ENCODE measurements at regions of chr1 and their contacts with region 1.

Region 1: DNA sequence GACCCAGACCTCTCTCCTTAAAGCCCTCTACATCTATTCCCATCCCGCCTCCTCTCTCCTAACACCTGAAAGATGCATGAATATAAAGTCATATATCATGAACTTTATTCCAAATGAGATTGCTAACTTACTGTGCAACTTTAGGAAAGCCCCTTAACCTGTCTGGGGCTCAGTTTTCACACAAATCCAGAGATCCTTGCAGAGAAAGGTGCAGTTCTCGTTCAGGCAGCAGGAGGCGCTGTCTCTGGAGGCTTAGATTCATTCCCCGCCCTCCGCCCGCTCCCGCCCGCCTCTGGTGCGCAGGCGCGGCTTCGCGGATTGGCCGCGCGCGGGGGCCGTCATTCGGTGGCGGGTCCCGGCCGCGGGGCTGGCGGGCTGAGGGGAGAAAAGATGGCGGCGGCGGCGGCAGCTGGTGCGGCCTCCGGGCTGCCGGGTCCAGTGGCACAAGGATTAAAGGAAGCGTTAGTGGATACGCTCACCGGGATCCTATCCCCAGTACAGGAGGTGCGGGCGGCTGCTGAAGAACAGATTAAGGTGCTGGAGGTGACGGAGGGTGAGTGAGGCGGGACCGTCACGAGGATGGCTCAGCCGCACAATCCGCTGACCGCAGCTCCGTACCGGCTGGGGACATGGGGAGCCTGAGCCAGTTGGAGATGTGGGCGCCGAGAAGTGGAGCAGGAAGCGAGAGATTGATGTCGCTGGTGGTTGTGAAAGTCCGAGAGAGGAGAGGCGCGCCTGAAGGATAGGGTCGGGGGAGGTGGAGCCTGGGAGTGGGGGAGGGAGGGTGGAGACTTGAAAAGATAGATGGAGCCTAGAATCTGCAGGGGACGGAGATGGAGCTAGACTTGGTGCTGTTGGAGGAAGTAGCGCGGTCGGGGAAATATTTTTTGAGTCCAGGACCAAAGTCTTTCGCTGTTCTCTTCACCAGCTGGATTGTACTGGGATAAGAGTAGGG is at the start of gene IPO9:
- DNase-seq: peak; percentile 89 to 96 (median 95)
- ATAC-seq: peak; percentile 98
- H3K4me3 ChIP-seq: peak within 1 kb of the TSS; percentile 97
- H3K4me3 Mint-ChIP-seq: peak within 1 kb of the TSS; percentile 90 to 100 (median 96)
- H3K27ac ChIP-seq: peak within 1 kb of the TSS; percentile 93
- H3K27ac Mint-ChIP-seq: peak within 1 kb of the TSS; percentile 80 to 97 (median 91)
- H3K4me1 ChIP-seq: peaks cover 16 to 19% of the 10 kb centered on the region in 2 donors
- H3K4me1 Mint-ChIP-seq: peaks cover 29 to 55% (median 41%) of the 10 kb centered on the region in 7 donors
- H3K27me3 ChIP-seq: no peaks in the 10 kb centered on the region
- H3K27me3 Mint-ChIP-seq: no peaks in the 10 kb centered on the region
- total RNA-seq, gene IPO9: 28.7 to 55.3 (median 37.9) TPM

Region 2: DNA sequence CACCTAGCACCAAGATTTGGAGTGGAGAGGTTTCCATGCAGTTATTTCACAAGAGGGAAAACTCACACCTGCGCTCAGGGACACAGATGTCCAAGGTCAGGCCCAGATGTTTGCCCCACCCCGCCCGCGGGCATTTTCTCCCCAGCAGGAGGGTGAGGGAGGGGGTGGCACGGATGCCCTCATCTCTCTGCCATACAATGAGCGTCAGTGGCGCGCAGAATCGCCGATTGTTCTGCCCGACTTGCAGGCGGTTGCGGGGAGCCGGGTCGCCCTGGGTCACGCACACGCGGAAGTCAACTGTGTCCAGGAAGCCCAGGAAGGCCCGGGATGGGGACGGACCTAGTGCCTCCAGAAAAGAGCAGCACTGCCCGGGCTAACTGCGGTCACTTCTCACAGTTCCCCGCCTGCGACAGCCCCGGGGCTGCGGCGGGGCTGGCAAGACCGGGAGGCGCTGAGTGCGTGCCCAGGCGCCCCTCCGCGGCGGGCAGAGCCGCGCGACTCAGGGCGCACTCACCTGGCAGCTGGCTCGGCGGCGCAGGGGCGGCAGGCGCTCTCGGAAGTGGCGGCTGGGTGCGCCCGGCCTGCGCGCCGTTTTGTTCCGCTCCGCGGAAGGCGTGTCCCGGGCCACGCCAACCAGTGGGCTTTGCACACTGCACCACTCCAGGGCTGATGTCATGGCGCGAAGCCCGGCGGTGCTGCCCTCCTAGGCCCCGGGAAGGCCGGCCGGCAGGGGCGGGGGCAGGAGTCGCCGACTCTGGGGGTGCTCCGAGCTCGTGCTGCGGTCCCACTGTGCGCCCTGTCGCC is 322.3 kb before region 1 on chr1 and contains the start of gene CSRP1:
- CTCF ChIA-PET with region 1: no interaction called
- POLR2A ChIA-PET with region 1: interaction called, 3 read pairs
- intact Hi-C with region 1: loop called in 1 of 2 experiments (anchors 2 kb)
- DNase-seq: peak; percentile 64 to 84 (median 80)
- ATAC-seq: peak; percentile 97
- H3K4me3 ChIP-seq: peak within 1 kb of the TSS; percentile 87
- H3K4me3 Mint-ChIP-seq: peak within 1 kb of the TSS; percentile 88 to 94 (median 91)
- H3K27ac ChIP-seq: peak within 1 kb of the TSS; percentile 74
- H3K27ac Mint-ChIP-seq: peak within 1 kb of the TSS; percentile 83 to 97 (median 91)
- H3K4me1 ChIP-seq: peaks cover 20 to 28% of the 10 kb centered on the region in 2 donors
- H3K4me1 Mint-ChIP-seq: peaks cover 30 to 61% (median 57%) of the 10 kb centered on the region in 7 donors
- H3K27me3 ChIP-seq: no peaks in the 10 kb centered on the region
- H3K27me3 Mint-ChIP-seq: no peaks in the 10 kb centered on the region
- total RNA-seq, gene CSRP1: 24.2 to 83.1 (median 37.7) TPM

Region 3: DNA sequence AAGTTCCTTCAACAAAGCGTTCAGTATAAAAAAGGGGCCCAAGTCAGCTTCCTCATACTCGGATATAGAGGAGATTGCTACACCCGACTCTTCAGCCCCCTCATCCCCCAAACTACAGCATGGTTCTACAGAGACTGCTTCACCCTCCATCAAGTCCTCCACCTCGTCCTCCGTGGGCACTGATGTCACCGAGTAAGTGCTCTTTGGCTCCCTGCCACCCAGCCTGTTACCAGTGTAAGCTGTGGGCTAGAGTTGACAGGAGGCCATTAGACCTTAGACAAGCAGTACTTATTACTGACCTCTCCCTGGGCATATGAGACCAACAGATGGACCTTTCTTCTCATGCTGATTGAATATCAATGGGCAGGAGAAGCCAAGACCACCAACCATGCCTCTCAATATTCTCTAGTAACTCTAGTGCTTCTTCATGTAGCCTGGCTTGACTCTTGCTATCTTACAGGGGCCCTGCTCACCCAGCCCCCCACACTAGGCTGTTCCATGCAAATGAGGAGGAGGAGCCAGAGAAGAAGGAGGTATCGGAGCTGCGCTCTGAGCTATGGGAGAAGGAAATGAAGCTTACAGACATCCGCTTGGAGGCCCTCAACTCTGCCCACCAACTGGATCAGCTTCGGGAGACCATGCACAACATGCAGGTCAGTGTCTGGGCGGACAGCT is 21.0 kb before region 1 on chr1:
- CTCF ChIA-PET with region 1: no interaction called
- POLR2A ChIA-PET with region 1: no interaction called
- intact Hi-C with region 1: no loop called
- DNase-seq: no peak
- ATAC-seq: no peak
- H3K4me3 ChIP-seq: no peak overlapping the region
- H3K4me3 Mint-ChIP-seq: no peak overlapping the region
- H3K27ac ChIP-seq: no peak overlapping the region
- H3K27ac Mint-ChIP-seq: no peak overlapping the region
- H3K4me1 ChIP-seq: no peaks in the 10 kb centered on the region
- H3K4me1 Mint-ChIP-seq: no peaks in the 10 kb centered on the region
- H3K27me3 ChIP-seq: no peaks in the 10 kb centered on the region
- H3K27me3 Mint-ChIP-seq: no peaks in the 10 kb centered on the region

Region 4: DNA sequence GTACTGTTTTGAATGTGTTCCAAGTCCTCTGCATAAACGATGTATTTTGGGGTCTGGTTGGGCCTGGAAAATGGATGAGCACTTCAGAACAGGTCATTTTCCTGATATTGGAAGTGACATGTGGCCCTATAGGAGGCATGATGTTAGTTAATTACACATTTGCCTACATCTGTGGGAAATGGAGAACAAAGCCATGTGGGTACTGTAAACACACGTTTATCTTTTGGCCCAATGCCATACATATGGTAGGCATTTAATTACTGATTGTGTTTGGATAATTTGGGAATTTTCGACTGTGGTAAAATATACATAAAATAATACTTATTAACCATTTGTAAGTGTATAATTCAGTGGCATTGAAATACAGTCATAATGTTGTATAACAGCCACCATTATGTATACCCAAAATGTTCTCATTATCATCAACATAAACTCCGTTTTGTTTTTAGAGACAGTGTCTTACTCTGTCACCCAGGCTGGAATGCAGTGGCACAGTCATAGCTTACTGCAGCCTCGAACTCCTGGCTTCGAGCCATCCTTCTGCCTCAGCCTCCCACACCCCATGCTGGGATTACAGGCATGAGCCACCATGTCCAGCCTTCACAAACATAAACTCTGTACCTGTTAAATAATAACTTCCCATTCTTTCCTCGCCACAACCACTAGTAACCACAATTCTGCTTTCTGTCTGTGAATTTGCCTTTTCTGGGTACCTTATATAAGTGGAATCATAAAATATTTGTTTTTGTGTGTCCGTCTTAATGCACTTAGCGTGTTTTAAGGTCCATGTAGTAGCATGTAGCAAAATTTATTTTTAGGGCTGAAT is 141.4 kb after region 1 on chr1:
- CTCF ChIA-PET with region 1: no interaction called
- POLR2A ChIA-PET with region 1: no interaction called
- intact Hi-C with region 1: loop called in 1 of 2 experiments (anchors 1 kb)
- DNase-seq: no peak
- ATAC-seq: no peak
- H3K4me3 ChIP-seq: no peak overlapping the region
- H3K4me3 Mint-ChIP-seq: no peak overlapping the region
- H3K27ac ChIP-seq: no peak overlapping the region
- H3K27ac Mint-ChIP-seq: no peak overlapping the region
- H3K4me1 ChIP-seq: no peaks in the 10 kb centered on the region
- H3K4me1 Mint-ChIP-seq: peaks cover 0 to 2% (median 0%) of the 10 kb centered on the region in 7 donors
- H3K27me3 ChIP-seq: no peaks in the 10 kb centered on the region
- H3K27me3 Mint-ChIP-seq: peaks cover 0 to 15% (median 0%) of the 10 kb centered on the region in 5 donors

Region 5: GRCh38 chr1:201982623-201983379 is 153.7 kb after region 1 on chr1 and contains the start of gene RNPEP:
- CTCF ChIA-PET with region 1: no interaction called
- POLR2A ChIA-PET with region 1: interaction called, 7 read pairs
- intact Hi-C with region 1: loop called in 1 of 2 experiments (anchors 2 kb)
- DNase-seq: peak; percentile 42 to 61 (median 58)
- ATAC-seq: peak; percentile 84
- H3K4me3 ChIP-seq: peak within 1 kb of the TSS; percentile 61
- H3K4me3 Mint-ChIP-seq: peak within 1 kb of the TSS; percentile 92 to 100 (median 97)
- H3K27ac ChIP-seq: peak within 1 kb of the TSS; percentile 82
- H3K27ac Mint-ChIP-seq: peak within 1 kb of the TSS; percentile 81 to 98 (median 93)
- H3K4me1 ChIP-seq: peaks cover 7 to 8% of the 10 kb centered on the region in 2 donors
- H3K4me1 Mint-ChIP-seq: peaks cover 18 to 34% (median 24%) of the 10 kb centered on the region in 7 donors
- H3K27me3 ChIP-seq: no peaks in the 10 kb centered on the region
- H3K27me3 Mint-ChIP-seq: peaks cover 0 to 16% (median 0%) of the 10 kb centered on the region in 5 donors
- total RNA-seq, gene RNPEP: 19.4 to 43.4 (median 26.8) TPM

Region 6: GRCh38 chr1:202009326-202010179 is 180.5 kb after region 1 on chr1:
- CTCF ChIA-PET with region 1: no interaction called
- POLR2A ChIA-PET with region 1: no interaction called
- intact Hi-C with region 1: no loop called
- DNase-seq: peak; percentile 11 to 69 (median 41)
- ATAC-seq: peak; percentile 85
- H3K4me3 ChIP-seq: no peak overlapping the region
- H3K4me3 Mint-ChIP-seq: no peak overlapping the region
- H3K27ac ChIP-seq: no peak overlapping the region
- H3K27ac Mint-ChIP-seq: no peak overlapping the region
- H3K4me1 ChIP-seq: no peaks in the 10 kb centered on the region
- H3K4me1 Mint-ChIP-seq: peaks cover 0 to 2% (median 0%) of the 10 kb centered on the region in 7 donors
- H3K27me3 ChIP-seq: no peaks in the 10 kb centered on the region
- H3K27me3 Mint-ChIP-seq: no peaks in the 10 kb centered on the region

Region 7: DNA sequence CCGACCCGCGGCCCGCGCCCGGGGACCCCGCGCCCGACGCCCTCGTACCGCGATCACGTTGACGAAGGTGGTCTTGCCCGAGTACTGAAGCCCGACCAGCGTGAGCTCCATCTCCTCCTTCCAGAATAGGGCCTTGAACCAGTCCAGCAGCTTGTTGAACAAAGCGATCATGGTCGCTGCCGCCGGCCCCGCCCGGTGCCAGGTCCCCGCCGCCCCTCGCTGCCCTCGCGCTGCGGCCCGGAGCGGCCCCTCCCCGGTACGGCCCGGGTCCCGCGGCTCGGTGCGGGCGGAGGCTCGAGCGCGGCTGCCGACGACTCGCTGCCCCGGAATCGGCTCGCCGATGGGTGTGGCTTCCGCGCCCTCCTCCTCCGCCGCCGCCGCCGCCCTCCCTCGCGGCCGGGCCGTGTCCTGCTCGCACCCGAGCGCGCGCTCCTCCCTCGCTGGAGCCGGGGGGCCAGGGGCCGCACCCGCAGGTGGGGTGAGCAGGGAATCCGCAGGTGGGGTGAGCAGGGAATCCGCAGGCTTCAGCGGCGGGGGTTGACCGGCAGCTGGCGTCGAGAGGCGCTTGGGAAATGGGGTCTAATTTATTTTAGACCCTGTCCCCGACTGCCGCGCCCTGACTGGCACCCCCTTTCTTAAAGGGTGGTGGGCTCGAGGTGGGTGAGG is 315.4 kb after region 1 on chr1 and contains the start of gene ARL8A:
- CTCF ChIA-PET with region 1: interaction called, 3 read pairs
- POLR2A ChIA-PET with region 1: no interaction called
- intact Hi-C with region 1: loop called in 1 of 2 experiments (anchors 10 kb)
- DNase-seq: peak; percentile 47 to 81 (median 62)
- ATAC-seq: peak; percentile 81
- H3K4me3 ChIP-seq: peak within 1 kb of the TSS; percentile 83
- H3K4me3 Mint-ChIP-seq: peak within 1 kb of the TSS; percentile 90 to 98 (median 93)
- H3K27ac ChIP-seq: peak within 1 kb of the TSS; percentile 83
- H3K27ac Mint-ChIP-seq: peak within 1 kb of the TSS; percentile 85 to 98 (median 92)
- H3K4me1 ChIP-seq: peaks cover 14 to 21% of the 10 kb centered on the region in 2 donors
- H3K4me1 Mint-ChIP-seq: peaks cover 16 to 44% (median 38%) of the 10 kb centered on the region in 7 donors
- H3K27me3 ChIP-seq: no peaks in the 10 kb centered on the region
- H3K27me3 Mint-ChIP-seq: no peaks in the 10 kb centered on the region
- total RNA-seq, gene ARL8A: 38.2 to 99.4 (median 54.3) TPM

Measured in naive thymus-derived CD4-positive, alpha-beta T cell (primary cell).